Ascending aorta (tissue), 2 donors: ENCODE measurements at regions of chr12 and their contacts with region 1.

Region 1: DNA sequence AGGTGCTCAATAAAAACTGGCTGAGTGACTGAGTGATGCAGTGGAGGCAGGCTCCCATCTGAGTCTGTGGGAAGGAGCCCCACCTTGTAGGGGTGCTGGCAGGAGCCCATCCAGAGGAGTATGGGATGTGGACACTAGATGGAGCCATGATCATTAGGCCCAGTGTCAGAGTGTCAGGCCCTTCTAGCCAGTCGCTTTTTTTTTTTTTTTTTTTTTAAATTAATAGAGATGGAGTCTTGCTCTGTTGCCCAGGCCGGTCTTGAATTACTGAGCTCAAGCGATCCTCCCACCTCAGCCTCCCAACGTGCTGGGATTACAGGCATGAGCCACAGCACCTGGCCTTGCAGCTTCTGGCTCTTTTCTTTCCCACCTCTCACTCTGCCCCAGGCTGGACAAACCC is 11.5 kb downstream of the RITA1 start:
- DNase-seq: peak in 1 of 2 donors; percentile 90
- H3K4me3 ChIP-seq: no peak overlapping the region
- H3K27ac ChIP-seq: peak overlapping the region in 1 of 2 donors; percentile 37
- H3K4me1 ChIP-seq: peaks cover 9 to 21% of the 10 kb centered on the region in 2 donors
- H3K27me3 ChIP-seq: no peaks in the 10 kb centered on the region
- CTCF ChIP-seq: peak; percentile 49 to 76 (median 68)

Region 2: GRCh38 chr12:112978163-112979040 is 218.6 kb before region 1 on chr12 and contains the start of gene OAS2:
- intact Hi-C with region 1: no loop called
- DNase-seq: peak; percentile 41 to 81
- H3K4me3 ChIP-seq: peak within 1 kb of the TSS; percentile 45 to 69
- H3K27ac ChIP-seq: peak within 1 kb of the TSS; percentile 62 to 75
- H3K4me1 ChIP-seq: peaks cover 0 to 2% of the 10 kb centered on the region in 2 donors
- H3K27me3 ChIP-seq: no peaks in the 10 kb centered on the region
- CTCF ChIP-seq: no peak
- total RNA-seq, gene OAS2: 8.0 TPM

Region 3: DNA sequence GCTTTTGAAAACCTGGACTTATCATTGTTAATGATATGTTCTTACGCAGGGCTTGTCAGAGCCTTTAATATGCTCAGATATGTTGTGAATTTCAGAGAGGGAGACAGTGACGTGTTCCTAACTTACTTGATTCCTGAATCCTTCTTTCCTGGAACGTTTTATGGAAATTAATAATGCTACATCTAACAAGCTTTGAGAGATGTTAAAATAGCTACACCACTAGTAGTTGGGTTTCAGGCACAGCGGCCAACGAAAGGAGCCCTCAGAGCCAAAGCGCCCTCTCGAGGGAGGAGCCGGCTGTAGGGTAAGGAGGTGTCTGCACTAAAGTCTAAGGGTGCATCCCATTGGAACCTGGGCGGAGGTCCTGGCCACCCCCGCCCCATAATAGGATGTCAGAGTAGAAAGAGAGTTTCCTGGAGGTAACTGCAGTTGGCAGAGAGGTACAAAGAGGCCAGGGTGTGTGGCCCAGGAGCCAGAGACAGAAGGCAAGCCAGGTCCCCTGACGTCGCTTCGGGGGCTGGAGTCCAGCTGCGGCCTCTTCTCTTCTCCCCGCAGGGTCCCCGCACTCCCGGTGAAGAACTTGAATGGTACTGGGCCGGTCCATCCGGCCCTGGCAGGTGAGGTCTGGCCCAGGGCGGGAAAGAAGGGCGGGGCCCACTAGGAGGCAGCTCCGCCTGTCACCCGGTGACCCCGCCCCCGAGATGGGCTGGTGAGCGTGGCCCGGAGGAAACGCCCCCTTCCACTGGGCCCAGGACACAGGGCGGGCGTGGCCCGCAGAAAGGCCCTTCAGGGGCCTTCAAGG is 104.2 kb before region 1 on chr12:
- intact Hi-C with region 1: no loop called
- DNase-seq: no peak
- H3K4me3 ChIP-seq: peak overlapping the region in 1 of 2 donors; percentile 44
- H3K27ac ChIP-seq: no peak overlapping the region
- H3K4me1 ChIP-seq: no peaks in the 10 kb centered on the region
- H3K27me3 ChIP-seq: no peaks in the 10 kb centered on the region
- CTCF ChIP-seq: no peak

Region 4: DNA sequence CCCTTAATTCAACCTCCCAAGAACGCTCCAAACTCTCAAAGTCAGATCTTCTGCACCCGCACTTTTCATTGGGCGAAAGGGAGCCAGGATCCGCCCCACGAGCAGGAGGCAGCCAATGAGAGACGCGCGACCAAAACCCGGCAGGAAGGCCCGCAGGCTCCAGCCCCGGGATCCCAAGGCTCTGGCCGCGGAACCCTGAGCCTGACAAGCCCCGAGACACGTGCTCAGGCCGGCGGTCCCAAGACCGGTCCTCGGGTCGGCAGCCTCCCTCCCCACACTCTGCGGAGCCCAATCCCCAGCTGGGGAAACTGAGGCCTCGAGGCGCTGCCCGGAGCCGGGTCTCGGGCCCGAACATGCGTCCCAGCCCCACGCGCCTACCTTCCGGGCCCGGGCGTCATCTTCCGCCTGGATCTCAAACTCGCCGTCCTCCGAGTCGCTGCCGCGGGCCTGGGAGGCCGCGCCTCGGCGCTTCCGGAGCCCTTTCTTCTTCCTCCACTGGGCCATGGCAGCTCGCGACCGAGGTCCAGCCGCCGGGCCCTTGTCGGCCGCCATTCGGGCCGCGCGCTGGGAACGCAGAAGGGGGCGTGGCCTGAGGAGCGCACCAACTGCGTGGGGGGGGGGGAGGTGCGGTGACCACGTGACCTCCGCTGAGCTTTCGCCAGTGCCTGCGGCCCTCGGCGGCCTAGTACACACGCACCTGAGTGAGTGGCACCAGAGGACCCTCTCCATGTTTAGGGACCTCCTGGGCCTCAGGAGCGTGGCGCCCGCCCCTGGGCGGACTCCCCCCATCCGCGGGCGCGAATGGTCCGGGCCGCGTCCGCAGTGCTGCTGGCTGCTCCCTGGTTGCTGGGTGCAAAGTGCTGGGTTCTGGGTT is 11.9 kb before region 1 on chr12 and contains the starts of genes DDX54 and RITA1:
- intact Hi-C with region 1: loop called (anchors 1 kb)
- DNase-seq: peak; percentile 41 to 92
- H3K4me3 ChIP-seq: peak within 1 kb of the TSS; percentile 74 to 84
- H3K27ac ChIP-seq: peak within 1 kb of the TSS; percentile 89 to 96
- H3K4me1 ChIP-seq: peaks cover 11 to 20% of the 10 kb centered on the region in 2 donors
- H3K27me3 ChIP-seq: no peaks in the 10 kb centered on the region
- CTCF ChIP-seq: no peak
- total RNA-seq, gene DDX54: 97.0 TPM
- total RNA-seq, gene RITA1: 48.4 TPM

Region 5: DNA sequence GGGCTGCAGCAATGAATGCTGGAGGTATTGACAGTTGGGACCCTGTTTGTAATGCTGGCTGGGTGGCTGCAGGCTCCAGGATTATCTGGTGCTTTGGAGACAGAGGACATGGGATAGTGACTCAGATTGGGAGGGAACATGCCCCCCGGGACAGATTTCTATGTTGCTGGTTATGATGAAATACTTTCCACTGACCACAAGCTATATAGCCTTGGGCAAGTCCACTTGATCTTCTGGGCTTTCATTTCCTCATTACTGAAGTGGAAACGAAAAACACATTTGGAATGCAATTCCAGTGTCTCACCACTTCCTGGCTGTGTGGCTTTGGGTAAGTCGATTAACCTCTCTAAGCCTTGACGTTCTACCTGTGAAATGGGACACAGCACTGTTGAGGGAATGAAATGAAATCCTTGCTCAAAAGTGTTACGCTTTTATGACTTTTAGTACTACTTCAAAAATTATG is 18.0 kb after region 1 on chr12:
- intact Hi-C with region 1: loop called (anchors 2 kb)
- DNase-seq: peak in 1 of 2 donors; percentile 92
- H3K4me3 ChIP-seq: no peak overlapping the region
- H3K27ac ChIP-seq: peak overlapping the region; percentile 56 to 67
- H3K4me1 ChIP-seq: peaks cover 11 to 39% of the 10 kb centered on the region in 2 donors
- H3K27me3 ChIP-seq: no peaks in the 10 kb centered on the region
- CTCF ChIP-seq: peak in 1 of 3 experiments; percentile 13

Region 6: DNA sequence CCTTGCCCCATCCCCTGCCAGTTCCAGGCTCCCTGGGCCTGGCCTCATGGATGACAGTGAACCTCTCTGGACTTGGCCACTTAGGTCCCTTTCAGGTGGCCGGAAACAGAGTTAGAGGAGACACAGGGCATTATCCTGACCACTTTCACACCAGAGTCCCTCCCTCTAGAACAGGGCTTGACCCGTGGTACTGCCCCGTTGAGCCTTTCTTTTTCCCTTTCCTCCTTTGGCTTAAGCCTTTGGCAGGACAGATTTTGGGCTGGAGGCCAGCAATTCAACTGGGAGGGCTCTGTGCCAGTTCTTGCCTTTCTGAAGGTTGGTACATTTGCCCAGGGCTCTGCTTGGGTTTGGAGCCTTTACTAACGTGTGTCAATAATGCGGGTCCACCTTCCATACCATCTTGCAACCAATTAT is 47.1 kb after region 1 on chr12:
- intact Hi-C with region 1: loop called (anchors 2 kb)
- DNase-seq: peak in 1 of 2 donors; percentile 91
- H3K4me3 ChIP-seq: peak overlapping the region in 1 of 2 donors; percentile 34
- H3K27ac ChIP-seq: peak overlapping the region; percentile 86 to 94
- H3K4me1 ChIP-seq: peaks cover 48 to 78% of the 10 kb centered on the region in 2 donors
- H3K27me3 ChIP-seq: no peaks in the 10 kb centered on the region
- CTCF ChIP-seq: no peak

Region 7: DNA sequence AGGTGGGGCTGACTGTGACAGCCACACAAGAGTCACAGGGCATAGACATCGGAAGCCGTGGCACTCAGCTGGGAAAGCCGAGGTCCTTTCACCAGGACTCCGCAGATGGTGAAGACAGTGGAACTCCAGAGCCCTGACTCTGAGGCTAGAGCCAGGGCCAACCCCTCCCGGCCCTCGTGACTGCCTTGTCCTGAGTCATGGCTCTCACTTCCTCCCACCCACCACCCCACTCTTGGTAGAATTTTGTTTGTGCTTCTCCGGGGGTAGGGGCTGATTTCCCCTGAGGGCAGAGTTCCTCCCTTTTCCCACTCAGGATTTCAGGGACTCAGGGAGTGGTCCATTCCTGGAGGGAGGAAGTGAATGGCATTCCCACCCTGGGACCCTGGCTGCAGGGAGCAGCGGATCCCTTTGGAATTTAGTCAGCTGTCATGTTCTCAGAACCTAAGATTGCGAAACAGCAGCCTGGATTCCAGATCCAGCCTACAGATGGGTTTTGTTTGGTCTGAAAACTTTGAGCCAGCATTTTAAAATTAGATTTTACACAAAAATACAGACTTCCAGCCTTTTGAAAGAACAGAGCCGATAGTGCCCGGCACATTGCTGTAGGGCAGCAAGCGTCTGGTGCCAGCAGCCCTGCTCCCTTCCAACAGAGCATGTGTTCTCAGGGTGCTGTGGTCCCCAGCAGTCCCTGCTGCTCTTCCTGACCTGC is 75.0 kb after region 1 on chr12:
- intact Hi-C with region 1: loop called (anchors 1 kb)
- DNase-seq: peak; percentile 67 to 93
- H3K4me3 ChIP-seq: peak overlapping the region in 1 of 2 donors; percentile 43
- H3K27ac ChIP-seq: peak overlapping the region; percentile 76 to 78
- H3K4me1 ChIP-seq: peaks cover 19 to 27% of the 10 kb centered on the region in 2 donors
- H3K27me3 ChIP-seq: no peaks in the 10 kb centered on the region
- CTCF ChIP-seq: no peak

Region 8: DNA sequence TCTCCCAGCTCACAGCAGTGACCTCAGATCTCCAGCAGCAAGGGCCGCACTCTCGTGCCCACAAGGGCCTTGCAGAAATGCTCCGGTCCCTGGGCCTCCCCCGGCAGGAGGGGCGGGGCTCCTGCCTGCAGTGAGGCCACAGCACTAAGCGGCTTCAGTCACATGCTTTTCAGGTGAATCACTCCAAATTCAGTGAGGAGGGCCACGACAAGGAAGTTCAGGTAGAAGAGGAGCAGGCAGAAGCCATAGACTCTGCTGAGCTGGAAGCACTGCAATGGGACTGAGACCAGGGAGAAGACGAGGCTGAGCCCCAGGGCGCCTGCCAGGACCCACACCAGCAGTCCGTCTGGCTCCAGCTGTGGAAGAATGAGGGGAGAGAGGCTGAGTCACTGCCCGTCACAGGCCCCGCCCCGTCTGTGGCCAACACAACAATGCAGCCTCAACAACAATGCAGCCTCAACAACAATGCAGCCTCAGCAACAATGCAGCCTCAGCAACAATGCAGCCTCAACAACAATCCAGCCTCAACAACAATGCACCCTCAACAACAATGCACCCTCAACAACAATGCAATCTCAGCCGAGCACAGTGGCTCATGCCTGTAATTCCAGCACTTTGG is 102.7 kb after region 1 on chr12:
- intact Hi-C with region 1: loop called (anchors 2 kb)
- DNase-seq: peak; percentile 42 to 84
- H3K4me3 ChIP-seq: peak overlapping the region in 1 of 2 donors; percentile 33
- H3K27ac ChIP-seq: peak overlapping the region; percentile 73 to 95
- H3K4me1 ChIP-seq: peaks cover 14 to 30% of the 10 kb centered on the region in 2 donors
- H3K27me3 ChIP-seq: no peaks in the 10 kb centered on the region
- CTCF ChIP-seq: no peak

Region 9: DNA sequence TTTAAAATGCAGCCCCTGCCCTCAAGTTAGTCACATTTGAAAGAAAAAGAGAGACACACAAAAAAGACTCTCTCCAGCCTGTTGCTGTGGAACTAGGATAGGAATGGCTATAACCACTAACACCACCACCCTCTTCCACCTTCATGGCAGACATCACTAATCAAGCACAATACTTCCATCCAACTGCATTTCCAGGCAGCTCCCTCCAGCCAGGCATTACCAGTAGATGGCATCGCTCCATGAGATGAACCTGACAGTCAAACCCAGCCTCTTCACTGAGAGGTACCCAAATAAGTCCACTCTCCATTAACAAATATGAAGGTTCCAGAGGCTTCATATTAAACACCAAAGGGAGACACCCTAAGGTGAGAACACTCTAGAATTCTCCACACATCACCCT is 113.5 kb after region 1 on chr12:
- intact Hi-C with region 1: no loop called
- DNase-seq: no peak
- H3K4me3 ChIP-seq: no peak overlapping the region
- H3K27ac ChIP-seq: no peak overlapping the region
- H3K4me1 ChIP-seq: no peaks in the 10 kb centered on the region
- H3K27me3 ChIP-seq: no peaks in the 10 kb centered on the region
- CTCF ChIP-seq: no peak

Region 10: GRCh38 chr12:113334786-113335540 is 138.0 kb after region 1 on chr12 and contains the start of gene SLC8B1:
- intact Hi-C with region 1: loop called (anchors 2 kb)
- DNase-seq: peak; percentile 47 to 94
- H3K4me3 ChIP-seq: peak within 1 kb of the TSS; percentile 68 to 86
- H3K27ac ChIP-seq: peak within 1 kb of the TSS; percentile 69 to 78
- H3K4me1 ChIP-seq: peaks cover 0 to 20% of the 10 kb centered on the region in 2 donors
- H3K27me3 ChIP-seq: no peaks in the 10 kb centered on the region
- CTCF ChIP-seq: peak in 1 of 3 experiments; percentile 31
- total RNA-seq, gene SLC8B1: 114 TPM